Activated CD4-positive, alpha-beta T cell treated with anti-CD3 and anti-CD28 coated beads for 36 hours (primary cell): ENCODE measurements at regions of chr5 and their contacts with region 1.

Region 1: GRCh38 chr5:56270568-56271392 is 37.6 kb upstream of the ANKRD55 start:
- DNase-seq: peak; percentile 87
- ATAC-seq: peak; percentile 97
- H3K4me3 Mint-ChIP-seq: no peak overlapping the region
- H3K27ac Mint-ChIP-seq: peak overlapping the region; percentile 81
- H3K4me1 Mint-ChIP-seq: peaks cover 19% of the 10 kb centered on the region
- H3K27me3 Mint-ChIP-seq: no peaks in the 10 kb centered on the region

Region 2: DNA sequence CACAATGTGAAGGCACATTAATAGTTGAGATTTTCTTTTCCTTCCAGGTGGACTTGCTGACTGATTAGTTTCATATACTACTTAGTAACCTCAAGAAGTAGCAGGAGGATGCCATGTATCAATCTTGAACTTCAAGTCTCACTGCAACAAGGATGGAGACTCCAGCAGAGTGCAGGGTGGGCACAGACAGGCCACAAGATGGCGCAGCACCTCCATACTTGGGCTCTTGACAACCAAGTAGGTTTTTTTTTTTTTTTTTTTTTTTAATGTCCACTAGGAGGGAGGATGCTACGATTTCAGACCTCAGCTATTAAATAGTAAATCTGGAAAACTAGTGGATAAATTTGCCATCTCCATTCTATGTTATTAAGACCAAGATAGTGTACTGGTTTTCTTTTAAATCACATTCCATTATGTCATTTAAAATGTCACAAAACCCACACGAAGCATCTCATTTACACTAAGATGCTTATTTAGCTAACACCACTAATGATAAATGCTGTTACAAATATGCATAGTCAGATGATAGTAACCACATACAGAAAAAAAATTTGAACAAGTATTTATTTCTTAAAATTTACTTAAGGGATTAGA is 334.6 kb before region 1 on chr5:
- CTCF ChIA-PET with region 1: interaction called, 26 read pairs
- POLR2A ChIA-PET with region 1: interaction called, 4 read pairs
- intact Hi-C with region 1: loop called in 1 of 2 experiments (anchors 2 kb)
- DNase-seq: peak; percentile 91
- ATAC-seq: peak; percentile 81
- H3K4me3 Mint-ChIP-seq: no peak overlapping the region
- H3K27ac Mint-ChIP-seq: no peak overlapping the region
- H3K4me1 Mint-ChIP-seq: peaks cover 16% of the 10 kb centered on the region
- H3K27me3 Mint-ChIP-seq: no peaks in the 10 kb centered on the region

Region 3: DNA sequence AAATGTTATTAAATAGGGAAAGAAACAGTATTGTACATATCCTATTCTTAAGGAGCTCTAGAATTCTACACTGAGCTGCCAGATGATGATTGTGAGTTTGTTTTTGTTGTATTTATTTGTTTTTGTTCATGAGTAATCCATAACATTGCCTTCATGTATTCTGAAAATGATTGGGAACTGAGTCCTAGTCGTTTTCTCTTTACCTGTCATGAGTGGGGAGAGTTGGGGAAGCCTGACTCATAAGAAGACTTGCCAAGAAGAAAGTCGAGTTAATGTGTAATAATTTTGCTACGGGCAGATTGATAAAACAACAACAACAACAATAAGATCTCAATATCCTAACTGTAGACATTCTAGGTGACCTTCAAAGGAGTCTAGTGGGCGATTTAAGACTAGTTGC is 141.5 kb before region 1 on chr5:
- CTCF ChIA-PET with region 1: no interaction called
- POLR2A ChIA-PET with region 1: no interaction called
- intact Hi-C with region 1: no loop called
- DNase-seq: no peak
- ATAC-seq: peak; percentile 8
- H3K4me3 Mint-ChIP-seq: no peak overlapping the region
- H3K27ac Mint-ChIP-seq: peak overlapping the region; percentile 58
- H3K4me1 Mint-ChIP-seq: peaks cover 58% of the 10 kb centered on the region
- H3K27me3 Mint-ChIP-seq: no peaks in the 10 kb centered on the region

Region 4: DNA sequence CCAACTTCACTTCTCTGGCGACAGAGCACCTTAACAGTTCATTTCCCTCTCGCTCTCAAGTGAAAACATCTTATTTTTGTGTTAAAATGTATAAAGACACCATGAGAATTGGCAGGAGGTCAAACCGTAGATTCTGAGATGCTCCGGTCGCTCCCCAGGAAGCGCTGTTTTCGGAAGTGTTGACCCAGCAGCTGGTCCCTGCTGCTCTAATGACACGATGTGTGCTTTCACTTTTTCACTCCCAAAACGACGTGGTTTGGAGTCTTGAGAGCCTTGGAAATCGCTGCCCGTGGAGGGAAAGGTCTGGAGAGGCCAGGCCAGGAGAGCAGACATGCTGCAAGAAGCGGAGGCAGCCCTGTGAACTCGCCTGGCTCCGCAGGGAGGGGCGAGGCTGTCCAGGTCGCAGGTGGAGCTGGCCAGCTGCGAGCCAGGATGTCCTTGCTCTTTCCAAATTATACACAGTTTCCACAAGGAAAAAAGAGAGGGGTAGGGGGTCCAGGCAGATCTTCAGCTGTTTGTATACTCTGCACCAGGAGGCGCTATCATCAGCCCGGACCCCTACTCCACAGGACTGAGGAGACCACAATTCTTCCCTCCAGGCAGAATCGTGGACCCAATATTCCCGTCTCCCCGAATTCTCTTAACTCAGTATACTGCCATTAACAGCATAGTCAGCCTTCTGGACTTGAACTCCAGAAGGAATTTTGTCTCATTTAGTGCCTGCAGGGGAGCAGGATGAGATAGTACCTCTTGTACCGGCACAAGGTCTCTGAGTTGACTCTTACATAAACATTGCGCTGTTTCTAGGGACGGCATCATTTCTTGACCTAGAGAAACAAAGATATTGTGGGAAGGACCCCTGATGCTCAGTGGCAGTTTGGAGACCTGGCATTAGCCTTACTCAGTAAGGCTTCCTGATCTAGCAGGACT is 210.9 kb after region 1 on chr5:
- CTCF ChIA-PET with region 1: no interaction called
- POLR2A ChIA-PET with region 1: no interaction called
- intact Hi-C with region 1: loop called (anchors 2 to 5 kb)
- DNase-seq: peak; percentile 41
- ATAC-seq: peak; percentile 9
- H3K4me3 Mint-ChIP-seq: peak overlapping the region; percentile 74
- H3K27ac Mint-ChIP-seq: peak overlapping the region; percentile 84
- H3K4me1 Mint-ChIP-seq: peaks cover 41% of the 10 kb centered on the region
- H3K27me3 Mint-ChIP-seq: no peaks in the 10 kb centered on the region

Region 5: GRCh38 chr5:56838409-56839039 is 567.7 kb after region 1 on chr5:
- CTCF ChIA-PET with region 1: interaction called, 127 read pairs
- POLR2A ChIA-PET with region 1: interaction called, 3 read pairs
- intact Hi-C with region 1: loop called (anchors 1 kb)
- DNase-seq: no peak
- ATAC-seq: peak; percentile 67
- H3K4me3 Mint-ChIP-seq: peak overlapping the region; percentile 37
- H3K27ac Mint-ChIP-seq: peak overlapping the region; percentile 68
- H3K4me1 Mint-ChIP-seq: peaks cover 84% of the 10 kb centered on the region
- H3K27me3 Mint-ChIP-seq: no peaks in the 10 kb centered on the region

Region 6: DNA sequence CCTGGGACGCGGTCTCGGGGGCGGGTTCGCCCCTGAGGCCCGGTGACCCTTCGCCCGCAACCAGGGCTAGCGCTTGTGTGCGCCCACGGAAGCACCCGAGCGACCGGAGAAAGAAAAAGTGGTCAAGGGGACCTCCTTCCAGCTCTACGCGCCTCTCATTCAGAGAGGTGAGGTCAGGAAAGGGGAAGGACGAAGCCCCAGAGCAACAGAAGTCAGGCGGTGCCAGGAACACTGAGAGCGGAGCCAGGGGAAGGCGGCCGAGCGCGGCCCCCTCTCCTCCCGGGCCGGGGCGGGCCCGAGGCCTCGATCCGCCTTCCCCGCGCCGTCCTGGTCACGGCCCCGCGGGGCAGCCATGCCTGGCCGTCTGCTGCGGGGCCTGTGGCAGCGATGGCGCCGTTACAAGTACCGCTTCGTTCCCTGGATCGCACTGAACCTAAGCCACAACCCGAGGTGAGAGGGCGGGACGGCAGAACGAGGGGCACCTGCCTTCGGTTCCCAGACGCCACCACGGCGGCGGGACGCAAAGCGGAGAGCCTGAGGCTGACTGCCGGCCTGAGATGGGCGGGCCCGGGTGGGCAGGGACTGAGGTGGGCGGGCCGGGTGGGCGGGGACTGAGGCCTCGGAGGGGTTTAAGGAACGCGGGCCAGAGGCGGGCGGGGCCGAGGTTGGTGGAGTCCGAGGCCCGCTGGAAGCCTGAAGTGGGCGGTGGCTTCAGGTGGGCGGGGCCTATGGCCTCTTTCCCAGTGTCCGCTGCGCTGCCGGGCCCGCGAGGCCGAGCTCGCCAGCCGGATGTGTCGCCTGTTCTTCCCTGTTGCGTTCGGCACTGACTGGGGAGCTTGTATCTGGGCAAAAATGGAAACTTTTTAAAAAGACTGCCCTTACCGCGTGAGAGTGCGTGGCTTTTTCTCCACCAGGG is 638.8 kb after region 1 on chr5 and contains the start of gene SETD9:
- CTCF ChIA-PET with region 1: interaction called, 3 read pairs
- POLR2A ChIA-PET with region 1: interaction called, 3 read pairs
- intact Hi-C with region 1: loop called in 1 of 2 experiments (anchors 2 kb)
- DNase-seq: peak; percentile 97
- ATAC-seq: peak; percentile 92
- H3K4me3 Mint-ChIP-seq: peak within 1 kb of the TSS; percentile 90
- H3K27ac Mint-ChIP-seq: peak within 1 kb of the TSS; percentile 94
- H3K4me1 Mint-ChIP-seq: peaks cover 20% of the 10 kb centered on the region
- H3K27me3 Mint-ChIP-seq: peaks cover 5% of the 10 kb centered on the region
- total RNA-seq, gene SETD9: 5.4 to 6.8 TPM

Region 7: GRCh38 chr5:57221049-57221568 is 950.3 kb after region 1 on chr5:
- CTCF ChIA-PET with region 1: interaction called, 3 read pairs
- POLR2A ChIA-PET with region 1: no interaction called
- intact Hi-C with region 1: loop called in 1 of 2 experiments (anchors 5 kb)
- DNase-seq: no peak
- ATAC-seq: peak; percentile 54
- H3K4me3 Mint-ChIP-seq: no peak overlapping the region
- H3K27ac Mint-ChIP-seq: peak overlapping the region; percentile 73
- H3K4me1 Mint-ChIP-seq: peaks cover 46% of the 10 kb centered on the region
- H3K27me3 Mint-ChIP-seq: no peaks in the 10 kb centered on the region